Activated CD8-positive, alpha-beta T cell treated with anti-CD3 and anti-CD28 coated beads for 36 hours (primary cell): ENCODE measurements at regions of chr1 and their contacts with region 1.

Region 1: GRCh38 chr1:110524311-110525251 is 5.6 kb upstream of the KCNA10 start:
- DNase-seq: peak; percentile 69
- ATAC-seq: peak; percentile 92
- H3K4me3 Mint-ChIP-seq: no peak overlapping the region
- H3K27ac Mint-ChIP-seq: no peak overlapping the region
- H3K4me1 Mint-ChIP-seq: no peaks in the 10 kb centered on the region
- H3K27me3 Mint-ChIP-seq: peaks cover 10% of the 10 kb centered on the region
- CTCF ChIP-seq: peak; percentile 89

Region 2: GRCh38 chr1:110535985-110536384 is 11.4 kb after region 1 on chr1:
- CTCF ChIA-PET with region 1: interaction called, 12 read pairs
- POLR2A ChIA-PET with region 1: no interaction called
- intact Hi-C with region 1: no loop called
- DNase-seq: no peak
- ATAC-seq: no peak
- H3K4me3 Mint-ChIP-seq: no peak overlapping the region
- H3K27ac Mint-ChIP-seq: no peak overlapping the region
- H3K4me1 Mint-ChIP-seq: no peaks in the 10 kb centered on the region
- H3K27me3 Mint-ChIP-seq: no peaks in the 10 kb centered on the region
- CTCF ChIP-seq: no peak

Region 3: DNA sequence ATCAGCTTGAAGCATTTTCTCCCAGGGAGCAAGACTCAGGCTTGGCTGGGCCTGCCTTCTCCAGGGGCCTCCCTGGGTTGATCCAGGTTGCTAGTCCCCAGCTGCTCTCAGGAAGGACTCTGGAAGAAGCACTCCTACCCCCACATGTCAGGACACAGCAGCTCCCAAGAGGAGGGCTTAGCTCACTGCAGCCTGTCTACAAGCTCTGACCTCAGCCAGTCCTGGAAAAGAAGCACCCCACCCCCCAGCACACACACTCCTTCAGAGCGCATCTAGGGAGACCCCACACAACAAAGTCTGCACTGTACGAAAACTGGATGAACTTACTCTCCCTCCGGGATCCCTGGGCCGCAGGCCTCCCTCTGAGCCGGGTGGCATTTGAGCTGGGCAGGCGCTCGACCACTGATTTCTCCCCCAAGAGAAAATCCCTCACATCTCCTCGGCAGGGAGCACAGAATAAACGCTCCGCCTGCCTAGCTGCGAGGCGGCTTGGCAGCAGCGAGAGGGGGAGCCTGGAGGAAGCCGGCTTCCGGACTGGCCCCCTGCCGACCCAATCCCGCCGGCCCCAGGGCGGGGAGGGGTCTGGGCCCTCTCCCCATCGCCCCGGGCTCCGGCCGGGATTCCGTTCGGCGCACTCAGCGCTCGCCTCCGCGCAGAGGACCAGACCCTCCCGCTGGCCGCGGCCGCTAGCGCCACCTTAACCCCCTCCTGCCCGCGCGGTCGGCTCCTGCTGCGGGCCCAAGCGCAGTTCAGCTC is 81.5 kb after region 1 on chr1 and contains the start of gene KCNA2:
- CTCF ChIA-PET with region 1: interaction called, 35 read pairs
- POLR2A ChIA-PET with region 1: no interaction called
- intact Hi-C with region 1: no loop called
- DNase-seq: no peak
- ATAC-seq: peak; percentile 40
- H3K4me3 Mint-ChIP-seq: peak within 1 kb of the TSS; percentile 68
- H3K27ac Mint-ChIP-seq: no peak within 1 kb of the TSS
- H3K4me1 Mint-ChIP-seq: peaks cover 5% of the 10 kb centered on the region
- H3K27me3 Mint-ChIP-seq: peaks cover 44% of the 10 kb centered on the region
- CTCF ChIP-seq: no peak
- total RNA-seq, gene KCNA2: 0.02 to 0.14 TPM

Region 4: GRCh38 chr1:110612065-110612751 is 87.6 kb after region 1 on chr1:
- CTCF ChIA-PET with region 1: interaction called, 35 read pairs
- POLR2A ChIA-PET with region 1: no interaction called
- intact Hi-C with region 1: loop called (anchors 2 kb)
- DNase-seq: no peak
- ATAC-seq: no peak
- H3K4me3 Mint-ChIP-seq: no peak overlapping the region
- H3K27ac Mint-ChIP-seq: no peak overlapping the region
- H3K4me1 Mint-ChIP-seq: peaks cover 6% of the 10 kb centered on the region
- H3K27me3 Mint-ChIP-seq: peaks cover 14% of the 10 kb centered on the region
- CTCF ChIP-seq: no peak